Activated CD4-positive, alpha-beta T cell treated with anti-CD3 and anti-CD28 coated beads, Interleukin-2, amount 10 ng/mL, durations not matched to agents 7 days and 5 days (primary cell): ENCODE measurements at regions of chr16 and their contacts with region 1.

Region 1: DNA sequence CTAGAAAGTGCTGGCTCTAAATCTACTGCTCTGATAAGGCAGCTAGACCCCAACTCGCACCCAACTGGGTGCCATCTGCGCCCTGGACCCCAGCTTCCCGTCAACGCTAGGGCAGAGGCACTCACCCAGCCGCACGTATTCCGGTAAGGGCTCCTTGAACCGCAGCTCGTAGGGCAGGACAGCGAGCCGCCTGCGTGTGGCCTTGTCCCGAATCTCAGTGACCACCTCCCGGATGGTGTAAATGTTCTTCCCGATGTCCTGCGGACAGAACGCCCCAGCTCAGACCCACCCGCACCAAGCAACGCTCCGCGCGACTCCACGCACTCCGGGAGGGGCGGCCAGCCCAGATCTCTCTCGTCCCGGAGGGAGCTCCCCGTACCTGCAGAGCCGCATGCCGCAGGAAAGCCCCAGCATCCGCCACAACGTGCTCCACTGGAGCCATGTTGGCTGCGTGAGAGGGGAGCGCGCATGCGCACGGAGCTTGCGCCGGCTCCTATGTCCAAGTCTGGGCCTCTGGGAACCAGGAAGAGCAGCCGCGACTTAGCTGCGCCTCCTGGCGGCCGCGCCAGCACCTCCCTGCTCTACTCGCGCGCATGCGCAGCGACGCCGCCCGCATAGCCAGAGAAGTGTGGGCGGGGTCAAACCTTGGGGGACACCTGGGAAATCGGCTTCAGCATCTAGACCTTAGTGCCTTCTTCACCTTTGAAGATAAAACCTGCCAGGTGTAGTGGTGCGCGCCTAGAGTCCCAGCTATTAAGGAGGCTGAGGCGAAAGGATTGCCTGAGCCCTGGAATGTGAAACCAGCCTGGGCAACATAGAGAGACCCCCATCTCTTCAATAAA is at the start of gene NOB1:
- DNase-seq: peak; percentile 96
- H3K4me3 Mint-ChIP-seq: peak within 1 kb of the TSS; percentile 100
- H3K27ac Mint-ChIP-seq: peak within 1 kb of the TSS; percentile 98
- H3K4me1 Mint-ChIP-seq: peaks cover 33% of the 10 kb centered on the region
- H3K27me3 Mint-ChIP-seq: no peaks in the 10 kb centered on the region
- total RNA-seq, gene NOB1: 60.5 to 62.5 TPM

Region 2: GRCh38 chr16:69396187-69397061 is 358.3 kb before region 1 on chr16:
- CTCF ChIA-PET with region 1: interaction called, 13 read pairs
- POLR2A ChIA-PET with region 1: no interaction called
- DNase-seq: peak; percentile 79
- H3K4me3 Mint-ChIP-seq: no peak overlapping the region
- H3K27ac Mint-ChIP-seq: peak overlapping the region; percentile 67
- H3K4me1 Mint-ChIP-seq: peaks cover 13% of the 10 kb centered on the region
- H3K27me3 Mint-ChIP-seq: no peaks in the 10 kb centered on the region

Region 3: GRCh38 chr16:69703638-69704037 is 51.1 kb before region 1 on chr16:
- CTCF ChIA-PET with region 1: interaction called, 12 read pairs
- POLR2A ChIA-PET with region 1: no interaction called
- DNase-seq: no peak
- H3K4me3 Mint-ChIP-seq: no peak overlapping the region
- H3K27ac Mint-ChIP-seq: peak overlapping the region; percentile 46
- H3K4me1 Mint-ChIP-seq: no peaks in the 10 kb centered on the region
- H3K27me3 Mint-ChIP-seq: no peaks in the 10 kb centered on the region

Region 4: GRCh38 chr16:69717066-69717465 is 37.6 kb before region 1 on chr16:
- CTCF ChIA-PET with region 1: interaction called, 50 read pairs
- POLR2A ChIA-PET with region 1: no interaction called
- DNase-seq: no peak
- H3K4me3 Mint-ChIP-seq: no peak overlapping the region
- H3K27ac Mint-ChIP-seq: no peak overlapping the region
- H3K4me1 Mint-ChIP-seq: peaks cover 2% of the 10 kb centered on the region
- H3K27me3 Mint-ChIP-seq: no peaks in the 10 kb centered on the region

Region 5: GRCh38 chr16:69726296-69727060 is 28.2 kb before region 1 on chr16 and contains the start of gene NQO1:
- CTCF ChIA-PET with region 1: interaction called, 50 read pairs
- POLR2A ChIA-PET with region 1: interaction called, 5 read pairs
- DNase-seq: peak; percentile 95
- H3K4me3 Mint-ChIP-seq: peak within 1 kb of the TSS; percentile 92
- H3K27ac Mint-ChIP-seq: peak within 1 kb of the TSS; percentile 97
- H3K4me1 Mint-ChIP-seq: peaks cover 57% of the 10 kb centered on the region
- H3K27me3 Mint-ChIP-seq: no peaks in the 10 kb centered on the region
- total RNA-seq, gene NQO1: 20.4 to 22.4 TPM

Region 6: DNA sequence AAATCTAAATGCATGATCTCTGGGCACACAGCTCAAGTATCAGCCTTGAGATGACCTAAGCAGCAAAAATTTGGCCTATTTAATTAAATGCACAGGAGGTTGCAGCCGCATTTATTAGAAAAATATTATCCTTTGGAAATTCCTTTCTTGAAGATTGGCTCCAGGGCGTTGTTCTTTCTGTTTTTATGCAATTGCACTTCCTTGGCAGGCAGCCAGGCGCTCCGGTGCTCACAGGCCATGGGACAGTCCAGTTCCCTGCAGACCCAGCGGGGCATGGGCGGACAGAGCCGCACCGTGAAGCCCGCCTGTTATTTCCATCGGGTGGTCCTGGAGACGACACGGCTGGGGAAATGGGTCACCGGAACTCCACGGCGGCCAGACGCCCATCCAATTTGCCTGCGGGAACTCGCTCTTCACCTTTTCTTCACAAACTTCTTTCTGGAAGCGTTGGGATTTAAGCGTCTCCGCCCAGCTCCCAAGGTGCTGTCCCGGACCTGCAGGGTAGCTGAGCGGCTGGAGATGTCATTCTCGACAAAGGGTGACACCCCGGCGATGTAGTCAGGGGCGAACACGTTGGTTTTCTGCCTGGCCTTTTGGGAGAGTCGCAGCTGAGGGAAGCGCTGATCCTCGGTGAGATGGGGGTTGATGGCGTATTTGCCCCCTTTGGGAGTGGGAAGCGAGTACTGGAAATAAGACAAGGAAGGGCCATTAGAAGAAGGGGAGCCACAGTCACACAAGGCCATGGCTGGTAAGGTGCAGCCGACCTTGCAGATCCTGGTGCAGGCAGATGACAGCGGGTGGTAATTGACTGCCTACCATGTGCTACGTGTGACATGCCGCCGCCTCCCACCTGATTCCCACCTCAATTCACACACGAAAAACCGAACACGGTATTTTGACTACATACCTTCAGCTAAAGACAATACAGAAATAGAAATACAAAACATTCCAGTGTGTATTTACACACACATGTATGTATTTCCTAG is 12.5 kb before region 1 on chr16:
- CTCF ChIA-PET with region 1: interaction called, 15 read pairs
- POLR2A ChIA-PET with region 1: interaction called, 3 read pairs
- DNase-seq: no peak
- H3K4me3 Mint-ChIP-seq: no peak overlapping the region
- H3K27ac Mint-ChIP-seq: no peak overlapping the region
- H3K4me1 Mint-ChIP-seq: no peaks in the 10 kb centered on the region
- H3K27me3 Mint-ChIP-seq: no peaks in the 10 kb centered on the region

Region 7: GRCh38 chr16:69768666-69769065 is 14.0 kb after region 1 on chr16:
- CTCF ChIA-PET with region 1: interaction called, 18 read pairs
- POLR2A ChIA-PET with region 1: no interaction called
- DNase-seq: no peak
- H3K4me3 Mint-ChIP-seq: no peak overlapping the region
- H3K27ac Mint-ChIP-seq: no peak overlapping the region
- H3K4me1 Mint-ChIP-seq: peaks cover 44% of the 10 kb centered on the region
- H3K27me3 Mint-ChIP-seq: no peaks in the 10 kb centered on the region